ENCODE measurements at regions of chr11 and their contacts with region 1.

Region 1: DNA sequence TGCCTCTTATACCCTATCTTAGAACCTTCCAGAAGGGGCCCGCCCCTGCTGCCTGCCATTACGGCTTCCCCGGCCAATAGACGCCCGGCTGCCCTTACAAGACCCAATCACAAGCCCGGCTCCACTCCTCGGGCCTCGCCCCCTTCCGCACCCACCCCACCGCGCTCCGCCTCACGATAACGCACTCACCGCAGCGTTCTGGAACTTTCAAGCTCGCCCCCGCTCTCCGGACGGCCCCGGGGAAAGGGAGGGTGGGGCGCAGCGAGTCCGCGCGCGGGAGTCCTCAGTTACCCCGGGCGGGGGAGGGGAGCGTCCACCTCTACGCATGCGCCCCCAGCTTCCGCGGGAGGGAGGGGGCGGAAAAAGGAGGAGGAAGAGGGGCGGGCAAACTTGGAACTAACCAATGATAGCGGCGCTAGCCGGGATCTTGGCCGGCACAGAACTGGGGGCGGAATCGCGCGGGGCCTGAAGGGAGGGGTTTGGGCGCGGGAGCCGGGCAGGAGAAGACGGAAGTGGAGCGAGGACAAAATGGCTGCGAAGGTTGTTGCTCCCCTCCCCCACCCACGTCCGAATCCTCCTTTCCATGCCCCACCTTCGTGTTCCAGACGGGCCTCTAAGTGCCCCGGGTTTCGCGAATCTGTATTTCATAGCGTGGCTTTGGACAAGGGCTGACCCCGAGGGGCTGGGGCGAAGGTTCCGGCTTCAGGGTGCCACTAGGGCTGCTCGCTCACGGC is 389 bp upstream of the HSPA8 start:
- DNase-seq: peak; percentile 97 to 100 (median 100)
- ATAC-seq: peak; percentile 89
- H3K4me3 ChIP-seq: peak overlapping the region; percentile 91
- H3K4me3 Mint-ChIP-seq: peak overlapping the region; percentile 87 to 100 (median 99)
- H3K27ac ChIP-seq: peak overlapping the region; percentile 96
- H3K27ac Mint-ChIP-seq: peak overlapping the region; percentile 96 to 100 (median 99)
- H3K4me1 ChIP-seq: peaks cover 42 to 55% of the 10 kb centered on the region in 2 donors
- H3K4me1 Mint-ChIP-seq: peaks cover 48 to 67% (median 56%) of the 10 kb centered on the region in 7 donors
- H3K27me3 ChIP-seq: no peaks in the 10 kb centered on the region
- H3K27me3 Mint-ChIP-seq: peaks cover 0 to 7% (median 0%) of the 10 kb centered on the region in 5 donors

Region 2: DNA sequence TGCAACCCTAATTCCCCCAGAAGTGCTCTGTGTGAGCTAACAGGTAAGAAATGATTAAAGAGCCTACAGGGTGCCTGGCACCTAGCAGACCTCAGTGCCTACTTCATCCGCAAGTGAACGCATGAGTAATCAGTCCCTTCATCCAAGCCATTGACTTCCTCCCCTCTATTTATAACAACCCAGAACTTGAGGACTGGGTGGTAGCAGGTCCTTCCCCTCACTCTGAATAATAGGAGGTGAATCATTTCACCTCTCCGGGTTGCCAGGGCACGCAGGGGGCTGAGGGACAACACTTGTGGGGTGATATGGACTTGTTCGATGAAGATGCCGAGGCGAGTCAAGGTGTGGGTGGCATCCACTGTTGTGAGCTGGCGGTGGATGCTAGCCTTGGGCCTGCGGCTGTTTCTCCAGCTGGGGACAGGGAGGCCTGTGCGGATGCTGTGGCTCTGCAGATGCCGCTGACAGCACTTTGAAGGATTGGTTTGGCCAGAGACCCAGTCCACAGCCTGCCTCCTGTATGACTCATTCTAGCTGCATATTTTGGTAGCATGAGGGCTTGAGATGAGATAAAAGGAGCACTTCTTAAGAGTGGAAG is 1597.9 kb before region 1 on chr11:
- CTCF ChIA-PET with region 1: no interaction called
- POLR2A ChIA-PET with region 1: no interaction called
- intact Hi-C with region 1: loop called in 1 of 2 experiments (anchors 10 kb)
- DNase-seq: peak in 7 of 9 donors; percentile 29 to 83 (median 45)
- ATAC-seq: peak; percentile 66
- H3K4me3 ChIP-seq: peak overlapping the region; percentile 23
- H3K4me3 Mint-ChIP-seq: peak overlapping the region; percentile 50 to 99 (median 80)
- H3K27ac ChIP-seq: peak overlapping the region; percentile 77
- H3K27ac Mint-ChIP-seq: peak overlapping the region; percentile 85 to 99 (median 92)
- H3K4me1 ChIP-seq: peaks cover 97 to 99% of the 10 kb centered on the region in 2 donors
- H3K4me1 Mint-ChIP-seq: peaks cover 92 to 100% (median 96%) of the 10 kb centered on the region in 7 donors
- H3K27me3 ChIP-seq: no peaks in the 10 kb centered on the region
- H3K27me3 Mint-ChIP-seq: no peaks in the 10 kb centered on the region

Region 3: DNA sequence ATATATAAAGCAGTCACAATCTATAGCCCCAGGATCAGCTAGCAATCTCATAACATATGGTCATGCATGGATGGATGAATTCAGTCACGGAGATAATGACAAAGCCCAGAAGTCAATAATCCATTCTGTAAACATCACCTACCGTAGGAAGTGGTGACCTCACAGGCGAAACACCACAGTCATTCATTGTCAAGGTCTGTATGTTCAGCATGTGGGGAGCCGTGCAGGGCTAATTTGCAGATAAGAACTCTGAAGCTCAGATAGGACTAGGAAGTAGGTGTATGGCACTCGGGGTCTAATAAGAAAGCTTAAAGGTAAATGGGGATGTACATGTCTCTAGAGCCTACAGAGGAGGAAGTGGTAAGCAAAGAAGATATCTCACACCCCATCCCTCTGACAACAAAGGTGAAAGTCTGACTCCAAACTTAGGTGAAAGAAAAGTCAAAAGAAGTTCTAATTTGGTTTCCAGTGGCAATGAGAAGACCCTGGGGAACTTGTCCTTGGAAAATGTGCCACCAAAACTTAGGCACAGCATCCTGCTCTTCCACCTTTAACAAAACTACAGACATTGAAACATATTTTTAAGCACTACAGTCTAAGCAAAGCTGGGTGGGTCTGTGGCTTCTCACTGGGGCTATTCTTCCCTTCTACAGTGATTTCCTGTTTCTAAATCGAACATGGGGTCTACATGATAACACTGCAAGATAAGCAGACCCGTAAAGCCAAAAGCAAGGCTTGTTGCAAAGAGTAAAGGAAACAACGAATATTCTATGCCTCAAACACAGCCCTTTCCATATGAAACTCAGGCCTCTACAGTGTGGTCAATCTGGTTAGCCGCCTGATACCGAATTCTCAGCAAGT is 218.8 kb before region 1 on chr11:
- CTCF ChIA-PET with region 1: no interaction called
- POLR2A ChIA-PET with region 1: interaction called, 14 read pairs
- intact Hi-C with region 1: no loop called
- DNase-seq: peak in 7 of 9 donors; percentile 48 to 69 (median 55)
- ATAC-seq: peak; percentile 92
- H3K4me3 ChIP-seq: peak overlapping the region; percentile 32
- H3K4me3 Mint-ChIP-seq: peak overlapping the region; percentile 38 to 82 (median 70)
- H3K27ac ChIP-seq: peak overlapping the region; percentile 59
- H3K27ac Mint-ChIP-seq: peak overlapping the region; percentile 84 to 97 (median 90)
- H3K4me1 ChIP-seq: peaks cover 30 to 73% of the 10 kb centered on the region in 2 donors
- H3K4me1 Mint-ChIP-seq: peaks cover 24 to 57% (median 48%) of the 10 kb centered on the region in 7 donors
- H3K27me3 ChIP-seq: no peaks in the 10 kb centered on the region
- H3K27me3 Mint-ChIP-seq: peaks cover 0 to 5% (median 0%) of the 10 kb centered on the region in 5 donors

Region 4: GRCh38 chr11:122981388-122982264 is 80.7 kb before region 1 on chr11 and contains the start of gene BSX:
- CTCF ChIA-PET with region 1: interaction called, 3 read pairs
- POLR2A ChIA-PET with region 1: no interaction called
- intact Hi-C with region 1: loop called in 1 of 2 experiments (anchors 5 kb)
- DNase-seq: peak in 8 of 9 donors; percentile 30 to 71 (median 36)
- ATAC-seq: peak; percentile 72
- H3K4me3 ChIP-seq: no peak within 1 kb of the TSS
- H3K4me3 Mint-ChIP-seq: peak within 1 kb of the TSS in 6 of 10 donors; percentile 2 to 48 (median 20)
- H3K27ac ChIP-seq: no peak within 1 kb of the TSS
- H3K27ac Mint-ChIP-seq: peak within 1 kb of the TSS in 1 of 9 donors; percentile 15
- H3K4me1 ChIP-seq: peaks cover 0 to 16% of the 10 kb centered on the region in 2 donors
- H3K4me1 Mint-ChIP-seq: peaks cover 23 to 53% (median 35%) of the 10 kb centered on the region in 7 donors
- H3K27me3 ChIP-seq: peaks cover 32 to 54% of the 10 kb centered on the region in 2 donors
- H3K27me3 Mint-ChIP-seq: peaks cover 84 to 94% (median 92%) of the 10 kb centered on the region in 5 donors
- total RNA-seq, gene BSX: not detected

Region 5: DNA sequence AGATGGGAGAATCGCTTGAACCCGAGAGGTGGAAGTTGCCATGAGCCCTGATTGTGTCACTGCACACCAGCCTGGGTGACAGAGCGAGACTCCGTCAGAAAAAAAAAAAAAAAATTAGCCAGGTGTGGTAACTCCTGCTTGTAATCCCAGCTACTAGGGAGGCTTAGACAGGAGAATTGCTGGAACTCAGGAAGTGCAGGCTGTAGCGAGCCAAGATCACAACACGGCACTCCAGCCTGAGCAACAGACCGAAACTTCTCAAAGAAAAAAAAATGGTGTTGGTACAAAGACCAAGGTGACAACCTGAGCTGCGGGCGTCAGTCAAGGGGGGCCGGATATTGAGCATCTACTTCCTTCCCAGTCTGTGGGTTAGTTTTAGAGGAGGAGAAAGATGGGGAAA is 48.0 kb after region 1 on chr11:
- CTCF ChIA-PET with region 1: interaction called, 119 read pairs
- POLR2A ChIA-PET with region 1: interaction called, 532 read pairs
- intact Hi-C with region 1: loop called in 1 of 2 experiments (anchors 2 kb)
- DNase-seq: no peak
- ATAC-seq: no peak
- H3K4me3 ChIP-seq: peak overlapping the region; percentile 21
- H3K4me3 Mint-ChIP-seq: peak overlapping the region in 7 of 10 donors; percentile 4 to 47 (median 25)
- H3K27ac ChIP-seq: no peak overlapping the region
- H3K27ac Mint-ChIP-seq: peak overlapping the region; percentile 9 to 80 (median 58)
- H3K4me1 ChIP-seq: no peaks in the 10 kb centered on the region
- H3K4me1 Mint-ChIP-seq: peaks cover 0 to 11% (median 6%) of the 10 kb centered on the region in 7 donors
- H3K27me3 ChIP-seq: no peaks in the 10 kb centered on the region
- H3K27me3 Mint-ChIP-seq: peaks cover 0 to 31% (median 0%) of the 10 kb centered on the region in 5 donors

Region 6: DNA sequence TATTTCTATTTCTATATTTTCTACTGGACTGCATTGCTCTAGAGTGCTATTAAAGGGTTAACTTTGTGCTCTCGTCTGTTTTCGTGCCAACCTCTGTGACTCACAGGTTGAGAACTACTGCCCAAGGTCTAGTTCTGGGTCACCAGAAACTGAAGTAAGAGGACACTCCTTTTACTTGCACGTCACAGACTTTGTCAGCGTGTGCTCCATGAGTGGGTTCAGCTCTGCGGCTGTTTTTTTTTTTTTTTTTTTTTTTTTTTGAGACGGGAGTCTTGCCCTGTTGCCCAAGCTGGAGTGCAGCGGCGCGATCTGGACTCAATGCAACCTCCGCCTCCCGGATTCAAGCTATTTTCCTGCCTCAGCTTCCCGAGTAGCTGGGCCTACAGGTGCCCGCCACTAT is 82.9 kb after region 1 on chr11:
- CTCF ChIA-PET with region 1: no interaction called
- POLR2A ChIA-PET with region 1: no interaction called
- intact Hi-C with region 1: no loop called
- DNase-seq: no peak
- ATAC-seq: no peak
- H3K4me3 ChIP-seq: no peak overlapping the region
- H3K4me3 Mint-ChIP-seq: no peak overlapping the region
- H3K27ac ChIP-seq: no peak overlapping the region
- H3K27ac Mint-ChIP-seq: no peak overlapping the region
- H3K4me1 ChIP-seq: no peaks in the 10 kb centered on the region
- H3K4me1 Mint-ChIP-seq: peaks cover 0 to 1% (median 0%) of the 10 kb centered on the region in 7 donors
- H3K27me3 ChIP-seq: no peaks in the 10 kb centered on the region
- H3K27me3 Mint-ChIP-seq: peaks cover 0 to 10% (median 0%) of the 10 kb centered on the region in 5 donors

Region 7: DNA sequence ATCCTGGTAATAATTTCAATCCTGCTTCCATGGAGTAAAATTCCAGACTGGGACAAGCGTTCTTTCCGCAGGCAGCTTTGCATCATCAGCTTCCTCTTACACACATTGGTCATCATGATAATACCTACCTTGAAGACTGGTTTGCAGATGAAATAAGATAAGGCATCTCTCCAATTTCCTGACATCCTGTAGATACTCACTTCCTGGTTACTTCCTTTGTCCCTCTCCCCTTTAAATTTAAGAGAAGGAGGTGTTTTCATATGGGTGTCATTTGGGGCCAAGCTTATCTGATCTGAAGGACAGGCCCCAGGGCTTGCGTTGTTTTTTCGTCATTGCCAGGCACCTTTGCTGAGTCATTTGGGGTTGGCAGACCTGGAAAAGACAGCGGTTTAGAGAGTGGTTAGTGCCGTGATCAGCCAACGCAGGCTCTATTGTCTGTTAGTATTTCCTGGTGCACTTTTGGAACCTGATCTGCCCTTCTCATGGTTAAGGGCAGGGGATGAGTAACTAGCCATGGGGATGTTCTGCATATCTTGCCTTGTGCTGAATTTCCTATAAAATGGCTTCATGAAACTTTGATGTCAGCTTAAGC is 391.8 kb after region 1 on chr11:
- CTCF ChIA-PET with region 1: no interaction called
- POLR2A ChIA-PET with region 1: no interaction called
- intact Hi-C with region 1: loop called in 1 of 2 experiments (anchors 2 kb)
- DNase-seq: peak in 2 of 9 donors; percentile 19 to 75
- ATAC-seq: peak; percentile 62
- H3K4me3 ChIP-seq: no peak overlapping the region
- H3K4me3 Mint-ChIP-seq: peak overlapping the region in 6 of 10 donors; percentile 3 to 73 (median 8)
- H3K27ac ChIP-seq: no peak overlapping the region
- H3K27ac Mint-ChIP-seq: peak overlapping the region in 7 of 9 donors; percentile 2 to 94 (median 27)
- H3K4me1 ChIP-seq: peaks cover 4 to 22% of the 10 kb centered on the region in 2 donors
- H3K4me1 Mint-ChIP-seq: peaks cover 10 to 90% (median 36%) of the 10 kb centered on the region in 7 donors
- H3K27me3 ChIP-seq: no peaks in the 10 kb centered on the region
- H3K27me3 Mint-ChIP-seq: no peaks in the 10 kb centered on the region

Measured in naive thymus-derived CD4-positive, alpha-beta T cell (primary cell).